Endothelial cell of umbilical vein (primary cell): ENCODE measurements at regions of chr22 and their contacts with region 1.

Region 1: GRCh38 chr22:42959576-42960509 is 55.1 kb downstream of the PACSIN2 start:
- DNase-seq: peak; percentile 98
- H3K4me3 ChIP-seq: peak overlapping the region in 1 of 3 experiments; percentile 8
- H3K27ac ChIP-seq: peak overlapping the region; percentile 87
- H3K4me1 ChIP-seq: peaks cover 35% of the 10 kb centered on the region
- H3K27me3 ChIP-seq: no peaks in the 10 kb centered on the region
- CTCF ChIP-seq: no peak
- POLR2A ChIP-seq: peak; percentile 68

Region 2: DNA sequence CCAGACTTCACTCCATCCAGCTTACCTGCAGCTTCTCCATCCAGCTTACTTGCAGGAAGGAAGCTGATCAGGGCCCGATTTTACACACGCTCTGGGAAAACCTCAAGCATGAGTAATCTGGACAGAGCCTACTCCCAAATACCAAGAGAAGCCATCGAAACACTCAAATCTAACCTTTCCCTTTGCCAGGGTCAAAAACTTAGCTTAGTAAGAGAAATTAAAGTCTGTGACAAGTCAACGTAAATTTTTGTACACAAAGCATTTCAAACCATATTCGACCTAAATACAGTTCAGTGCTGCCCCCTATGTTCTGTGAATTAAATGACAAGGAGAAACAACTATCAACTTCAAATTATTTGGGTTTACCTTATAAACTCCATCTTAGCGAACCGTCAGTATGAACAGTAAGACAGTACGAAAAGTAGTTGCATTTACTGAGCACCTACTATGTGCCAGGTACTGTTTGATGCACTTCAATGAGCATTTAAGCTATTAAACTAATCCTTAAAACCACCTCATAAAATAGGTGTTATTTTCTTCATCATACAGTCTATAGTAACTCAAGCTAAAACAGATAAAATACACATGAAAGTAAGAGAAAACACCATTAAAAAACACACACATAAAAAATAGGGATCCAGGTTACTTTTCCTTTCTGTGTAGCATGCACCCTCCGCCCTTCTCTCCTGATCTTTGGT is 139.6 kb before region 1 on chr22:
- CTCF ChIA-PET with region 1: no interaction called
- POLR2A ChIA-PET with region 1: no interaction called
- dilution Hi-C with region 1: no loop called
- intact Hi-C with region 1: no loop called
- DNase-seq: peak; percentile 63
- H3K4me3 ChIP-seq: no peak overlapping the region
- H3K27ac ChIP-seq: no peak overlapping the region
- H3K4me1 ChIP-seq: peaks cover 13% of the 10 kb centered on the region
- H3K27me3 ChIP-seq: no peaks in the 10 kb centered on the region
- CTCF ChIP-seq: peak; percentile 5 to 32
- POLR2A ChIP-seq: no peak

Region 3: DNA sequence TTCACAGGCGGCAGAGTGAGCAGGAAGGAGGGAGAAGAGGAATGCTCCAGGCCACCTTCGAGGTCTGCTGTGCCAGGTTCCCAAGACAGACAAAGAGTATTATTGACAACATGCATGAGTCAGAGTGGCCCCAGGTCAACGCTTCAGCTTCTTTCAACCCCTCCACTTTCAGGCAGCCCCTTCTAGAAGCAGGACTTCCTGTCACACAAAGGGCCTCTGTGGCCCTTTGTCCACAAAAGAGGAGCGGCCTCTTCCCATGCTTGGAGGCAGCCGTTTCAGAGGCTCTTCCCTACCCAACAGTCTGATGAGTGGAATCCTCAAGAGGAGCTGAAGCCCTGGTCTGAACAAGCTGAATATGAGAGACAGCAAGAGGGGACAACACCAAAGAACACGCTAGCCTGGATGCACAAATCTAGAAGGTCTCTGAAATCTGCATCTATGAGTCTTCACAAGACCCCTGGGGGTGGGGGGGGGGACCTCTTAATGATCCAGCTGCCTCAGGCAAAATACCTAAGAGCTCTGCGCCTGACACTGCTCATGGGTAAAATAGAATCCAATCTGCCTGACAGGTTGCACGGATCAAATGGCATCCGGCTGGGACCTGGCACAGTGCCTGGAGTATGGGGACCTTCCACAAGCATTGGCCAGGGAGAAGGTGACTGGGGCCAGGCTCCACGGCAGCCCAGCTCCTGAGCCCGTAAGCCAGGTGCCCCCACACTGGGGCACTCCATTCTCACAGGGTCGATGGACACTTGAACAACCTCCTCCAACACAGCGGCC is 12.4 kb before region 1 on chr22:
- CTCF ChIA-PET with region 1: interaction called, 29 read pairs
- POLR2A ChIA-PET with region 1: no interaction called
- dilution Hi-C with region 1: no loop called
- intact Hi-C with region 1: no loop called
- DNase-seq: peak; percentile 71
- H3K4me3 ChIP-seq: no peak overlapping the region
- H3K27ac ChIP-seq: peak overlapping the region; percentile 13
- H3K4me1 ChIP-seq: peaks cover 21% of the 10 kb centered on the region
- H3K27me3 ChIP-seq: no peaks in the 10 kb centered on the region
- CTCF ChIP-seq: no peak
- POLR2A ChIP-seq: no peak

Region 4: GRCh38 chr22:43001271-43002201 is 41.7 kb after region 1 on chr22:
- CTCF ChIA-PET with region 1: interaction called, 6 read pairs
- POLR2A ChIA-PET with region 1: no interaction called
- dilution Hi-C with region 1: no loop called
- intact Hi-C with region 1: loop called (anchors 2 kb)
- DNase-seq: peak; percentile 29
- H3K4me3 ChIP-seq: peak overlapping the region in 1 of 3 experiments; percentile 16
- H3K27ac ChIP-seq: peak overlapping the region; percentile 78
- H3K4me1 ChIP-seq: peaks cover 59% of the 10 kb centered on the region
- H3K27me3 ChIP-seq: no peaks in the 10 kb centered on the region
- CTCF ChIP-seq: no peak
- POLR2A ChIP-seq: no peak